ENCODE measurements at regions of chr3 and their contacts with region 1.

Region 1: DNA sequence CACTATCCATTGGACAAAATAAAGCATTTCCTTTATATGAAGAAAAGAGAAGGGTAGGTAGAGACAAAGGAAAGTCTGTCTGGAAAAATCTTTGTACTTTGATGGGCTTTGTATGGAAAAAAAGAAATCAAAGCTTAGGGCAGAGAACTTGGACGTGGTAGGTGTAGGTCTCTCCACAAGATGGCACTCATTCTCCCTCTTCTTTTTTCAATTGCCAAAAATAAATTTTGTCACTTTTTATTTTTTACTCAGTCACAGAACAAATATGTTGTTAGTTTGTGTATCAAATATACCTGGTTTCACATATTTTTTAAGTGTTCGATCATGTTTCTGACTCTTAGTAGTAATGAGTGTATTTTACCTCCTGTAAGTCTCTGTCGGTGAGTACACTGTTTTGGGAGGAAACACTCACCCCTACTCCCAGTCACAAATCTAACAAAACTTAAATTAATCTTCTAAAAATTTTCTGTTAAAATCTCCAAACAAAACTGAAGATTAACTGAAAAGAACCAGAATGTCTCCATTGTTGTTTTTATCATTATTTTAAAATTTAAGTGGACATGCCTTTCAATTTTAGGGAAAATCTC is 415.8 kb upstream of the GOLIM4 start:
- DNase-seq: peak; percentile 8
- CTCF ChIP-seq: peak; percentile 37

Region 2: GRCh38 chr3:168497741-168498140 is 13.8 kb before region 1 on chr3:
- CTCF ChIA-PET with region 1: interaction called, 13 read pairs
- POLR2A ChIA-PET with region 1: no interaction called
- DNase-seq: no peak
- CTCF ChIP-seq: no peak

Region 3: GRCh38 chr3:168533600-168533999 is 22.1 kb after region 1 on chr3:
- CTCF ChIA-PET with region 1: no interaction called
- POLR2A ChIA-PET with region 1: no interaction called
- DNase-seq: no peak
- CTCF ChIP-seq: no peak

Region 4: GRCh38 chr3:168620826-168621225 is 109.3 kb after region 1 on chr3:
- CTCF ChIA-PET with region 1: interaction called, 18 read pairs
- POLR2A ChIA-PET with region 1: no interaction called
- DNase-seq: no peak
- CTCF ChIP-seq: peak; percentile 44

Measured in GM10248 (cell line).